Activated naive CD4-positive, alpha-beta T cell treated with anti-CD3 and anti-CD28 coated beads for 36 hours (primary cell): ENCODE measurements at regions of chr15 and their contacts with region 1.

Region 1: GRCh38 chr15:98518823-98519561 is 129.3 kb upstream of the IGF1R start:
- DNase-seq: peak; percentile 65
- H3K4me3 Mint-ChIP-seq: no peak overlapping the region
- H3K27ac Mint-ChIP-seq: no peak overlapping the region
- H3K4me1 Mint-ChIP-seq: peaks cover 5% of the 10 kb centered on the region
- H3K27me3 Mint-ChIP-seq: peaks cover 5% of the 10 kb centered on the region

Region 2: DNA sequence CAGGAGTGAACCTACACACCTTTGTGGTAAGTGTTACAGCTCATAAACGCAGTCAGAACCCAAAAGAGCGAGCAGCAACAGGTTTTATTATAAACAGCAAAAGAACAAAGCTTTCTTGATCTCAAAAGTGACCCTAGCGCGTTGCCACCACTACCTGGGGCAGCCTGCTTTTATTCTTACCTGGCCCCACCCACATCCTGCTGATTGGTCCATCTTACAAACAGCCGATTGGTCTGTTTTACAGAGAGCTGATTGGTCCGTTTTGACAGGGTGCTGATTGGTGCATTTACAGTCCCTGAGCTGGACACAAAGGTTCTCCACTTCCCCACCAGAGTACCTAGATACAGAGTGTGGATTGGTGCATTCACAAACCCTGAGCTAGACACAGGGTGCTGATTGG is 415.4 kb before region 1 on chr15:
- CTCF ChIA-PET with region 1: no interaction called
- intact Hi-C with region 1: no loop called
- DNase-seq: no peak
- H3K4me3 Mint-ChIP-seq: no peak overlapping the region
- H3K27ac Mint-ChIP-seq: no peak overlapping the region
- H3K4me1 Mint-ChIP-seq: no peaks in the 10 kb centered on the region
- H3K27me3 Mint-ChIP-seq: peaks cover 3% of the 10 kb centered on the region

Region 3: DNA sequence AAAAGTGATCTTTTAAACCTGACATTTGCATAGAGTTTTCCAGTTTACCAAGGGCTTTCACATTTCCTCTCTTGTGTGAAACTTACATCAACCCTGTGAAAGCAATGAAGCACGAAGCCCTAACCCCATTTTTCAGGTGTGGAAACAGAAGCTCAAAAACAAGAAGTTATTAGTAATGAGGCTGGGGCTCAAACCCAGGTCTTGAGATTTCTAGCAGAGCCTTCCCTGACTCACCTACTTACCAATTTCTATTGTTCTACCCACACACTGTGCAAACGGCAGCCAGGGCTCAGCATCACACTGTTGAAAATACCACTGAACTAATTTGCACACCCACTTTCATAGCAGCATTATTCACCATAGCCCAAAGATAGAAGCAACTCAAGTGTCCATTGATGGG is 11.6 kb after region 1 on chr15:
- CTCF ChIA-PET with region 1: interaction called, 10 read pairs
- intact Hi-C with region 1: no loop called
- DNase-seq: peak; percentile 19
- H3K4me3 Mint-ChIP-seq: no peak overlapping the region
- H3K27ac Mint-ChIP-seq: no peak overlapping the region
- H3K4me1 Mint-ChIP-seq: no peaks in the 10 kb centered on the region
- H3K27me3 Mint-ChIP-seq: peaks cover 18% of the 10 kb centered on the region

Region 4: DNA sequence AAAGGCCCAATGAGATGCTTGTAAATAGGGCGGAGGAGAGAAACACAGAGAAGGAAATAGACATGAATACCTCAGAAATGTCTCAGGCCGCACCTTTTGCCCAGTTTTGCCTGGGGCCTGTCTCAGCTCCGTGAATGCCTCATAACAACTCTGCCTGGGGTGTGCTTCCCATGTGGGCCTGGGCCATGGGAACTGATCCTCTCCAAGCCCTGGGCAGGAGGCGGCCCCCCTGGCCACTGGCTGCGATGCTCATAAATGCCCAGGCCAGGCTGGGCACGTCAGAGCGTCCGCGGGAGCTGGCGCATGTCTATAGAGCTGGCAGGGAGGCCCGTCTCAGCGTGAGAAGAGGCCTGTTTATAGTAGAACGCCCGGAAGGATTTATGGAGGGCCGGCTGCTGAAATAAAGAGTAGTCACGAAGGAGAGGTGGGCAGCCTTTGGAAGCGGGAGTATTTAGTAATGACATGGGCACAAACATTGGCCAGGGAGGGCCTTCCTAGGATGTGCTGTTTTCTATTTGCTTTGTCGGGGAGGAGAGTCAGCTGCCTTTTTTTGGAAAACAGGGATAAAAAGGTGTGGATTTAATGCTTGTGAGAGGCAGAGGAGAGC is 43.4 kb after region 1 on chr15:
- CTCF ChIA-PET with region 1: interaction called, 10 read pairs
- intact Hi-C with region 1: no loop called
- DNase-seq: no peak
- H3K4me3 Mint-ChIP-seq: no peak overlapping the region
- H3K27ac Mint-ChIP-seq: no peak overlapping the region
- H3K4me1 Mint-ChIP-seq: peaks cover 4% of the 10 kb centered on the region
- H3K27me3 Mint-ChIP-seq: no peaks in the 10 kb centered on the region

Region 5: DNA sequence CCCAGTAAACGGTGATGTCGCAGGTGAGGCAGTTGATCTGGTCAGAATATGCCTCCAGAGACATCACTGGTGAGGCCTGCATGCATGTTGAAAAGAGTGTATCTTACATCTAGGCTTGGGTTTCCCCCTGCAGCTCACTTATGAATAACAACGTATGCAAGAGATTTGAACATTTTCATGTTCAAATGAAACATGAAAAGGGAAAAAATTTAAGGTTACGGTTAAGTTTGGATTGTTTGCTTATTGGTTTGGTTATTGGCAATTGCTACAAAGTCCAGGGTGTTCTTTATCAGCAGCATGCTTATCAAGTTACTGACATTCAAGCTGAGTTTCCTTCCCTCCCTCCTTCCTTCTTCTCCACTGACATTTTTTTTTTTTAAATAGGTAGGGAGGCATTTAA is 252.5 kb after region 1 on chr15:
- CTCF ChIA-PET with region 1: interaction called, 6 read pairs
- intact Hi-C with region 1: loop called (anchors 2 kb)
- DNase-seq: peak; percentile 36
- H3K4me3 Mint-ChIP-seq: no peak overlapping the region
- H3K27ac Mint-ChIP-seq: no peak overlapping the region
- H3K4me1 Mint-ChIP-seq: peaks cover 74% of the 10 kb centered on the region
- H3K27me3 Mint-ChIP-seq: no peaks in the 10 kb centered on the region

Region 6: DNA sequence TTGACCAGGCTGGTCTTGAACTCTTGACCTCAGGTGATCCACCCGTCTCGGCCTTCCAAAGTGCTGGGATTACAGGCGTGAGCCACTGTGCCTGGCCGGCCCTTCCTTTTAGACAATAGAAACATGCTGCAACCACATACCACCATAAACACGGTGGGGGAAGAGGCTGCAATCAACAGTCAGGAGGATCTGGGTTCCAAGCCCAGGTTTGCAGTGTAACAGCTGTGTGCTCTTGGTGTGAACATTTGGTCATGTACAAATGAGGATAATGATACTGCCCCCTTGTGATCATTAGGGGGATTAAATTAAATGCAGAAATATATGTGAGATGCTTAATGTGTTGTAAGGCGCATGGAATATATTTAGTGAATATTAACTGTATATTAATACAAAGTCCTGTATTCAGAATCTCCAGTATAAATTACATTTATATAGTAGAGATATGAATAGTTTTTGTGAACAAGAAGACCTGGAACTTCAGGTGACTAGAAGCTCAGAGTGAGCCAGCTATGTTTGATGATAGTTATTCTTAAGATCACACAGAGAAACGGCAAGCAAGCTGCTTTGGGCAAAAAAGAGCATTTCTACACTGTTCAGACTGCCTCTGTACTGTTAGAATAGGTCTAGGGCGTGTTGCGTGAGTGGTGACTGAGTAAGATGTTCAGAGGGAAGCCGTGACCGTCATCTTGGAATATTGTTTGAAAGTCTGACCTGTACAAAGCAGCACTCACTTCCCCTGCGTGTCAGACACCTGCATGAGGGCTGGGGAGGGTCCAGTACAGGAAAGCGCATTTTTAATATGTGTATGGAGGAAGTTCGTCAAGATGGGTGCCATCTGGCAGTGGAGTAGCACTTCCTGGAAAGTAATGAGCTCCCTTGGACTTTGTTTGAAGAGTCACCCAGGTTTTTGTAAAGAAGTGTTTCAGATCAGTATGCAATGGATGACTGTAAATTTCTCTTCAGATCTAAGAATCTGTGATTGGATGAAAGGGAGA is 362.8 kb after region 1 on chr15:
- CTCF ChIA-PET with region 1: interaction called, 31 read pairs
- intact Hi-C with region 1: loop called (anchors 1 kb)
- DNase-seq: peak; percentile 23
- H3K4me3 Mint-ChIP-seq: no peak overlapping the region
- H3K27ac Mint-ChIP-seq: peak overlapping the region; percentile 25
- H3K4me1 Mint-ChIP-seq: peaks cover 14% of the 10 kb centered on the region
- H3K27me3 Mint-ChIP-seq: no peaks in the 10 kb centered on the region

Region 7: DNA sequence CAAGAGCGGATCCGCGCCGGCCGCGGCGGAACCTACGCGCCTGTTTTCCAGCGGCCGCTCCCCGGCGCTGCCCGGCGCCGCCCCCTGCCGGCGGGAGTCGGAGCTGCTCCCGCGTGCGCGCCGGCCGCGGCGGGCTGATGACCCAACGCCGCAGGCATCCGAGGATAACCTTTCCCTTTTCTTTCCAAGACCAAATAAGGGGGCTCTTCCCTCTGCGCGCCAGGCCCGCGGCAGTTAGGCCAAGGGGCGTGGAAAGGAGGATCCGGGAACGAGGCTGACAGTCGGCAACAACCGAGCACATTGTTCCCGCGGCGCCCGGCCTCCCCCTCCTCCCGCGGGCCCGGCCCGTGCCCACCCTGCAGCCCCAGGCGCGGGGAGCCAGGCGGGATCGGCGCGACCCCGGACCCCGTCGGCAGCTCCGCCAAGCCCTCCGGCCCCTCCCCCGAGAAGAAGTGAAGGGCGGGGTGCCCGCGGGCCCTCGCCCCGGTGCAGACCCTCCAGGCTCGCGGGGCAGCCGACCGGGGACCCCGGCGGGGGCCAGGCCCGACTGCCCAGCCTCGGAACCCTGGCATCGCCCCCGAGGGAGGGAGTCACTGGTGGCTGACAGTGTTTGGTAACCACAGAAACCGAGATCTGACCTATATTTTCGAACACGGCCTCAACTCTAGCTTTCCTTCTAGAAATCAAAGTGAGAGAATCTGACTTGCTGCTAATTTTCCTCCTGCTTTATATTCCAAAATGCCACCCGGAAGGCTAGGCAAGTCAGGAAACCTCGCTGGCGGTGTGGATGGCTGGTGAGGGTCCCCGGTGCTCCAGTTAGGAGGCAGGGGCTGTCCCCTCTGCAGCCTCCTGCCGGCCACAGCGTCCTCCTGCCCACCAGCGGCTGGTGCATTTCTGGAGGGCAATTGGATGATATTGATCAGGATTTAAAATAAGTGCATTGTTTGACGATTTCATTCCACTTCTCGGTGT is 540.3 kb after region 1 on chr15:
- CTCF ChIA-PET with region 1: interaction called, 4 read pairs
- intact Hi-C with region 1: loop called (anchors 5 kb)
- DNase-seq: peak; percentile 52
- H3K4me3 Mint-ChIP-seq: peak overlapping the region; percentile 70
- H3K27ac Mint-ChIP-seq: no peak overlapping the region
- H3K4me1 Mint-ChIP-seq: peaks cover 6% of the 10 kb centered on the region
- H3K27me3 Mint-ChIP-seq: peaks cover 33% of the 10 kb centered on the region